BJ (cell line): ENCODE measurements at regions of chr6 and their contacts with region 1.

Region 1: GRCh38 chr6:18253635-18254034 is 10.7 kb downstream of the DEK start:
- DNase-seq: no peak
- H3K4me3 ChIP-seq: no peak overlapping the region
- H3K27me3 ChIP-seq: no peaks in the 10 kb centered on the region
- CTCF ChIP-seq: no peak

Region 2: GRCh38 chr6:17688481-17688880 is 565.2 kb before region 1 on chr6:
- CTCF ChIA-PET with region 1: no interaction called
- POLR2A ChIA-PET with region 1: interaction called, 12 read pairs
- DNase-seq: no peak
- H3K4me3 ChIP-seq: no peak overlapping the region
- H3K27me3 ChIP-seq: no peaks in the 10 kb centered on the region
- CTCF ChIP-seq: no peak

Region 3: GRCh38 chr6:18293076-18293904 is 39.7 kb after region 1 on chr6:
- CTCF ChIA-PET with region 1: no interaction called
- POLR2A ChIA-PET with region 1: no interaction called
- DNase-seq: peak; percentile 90
- H3K4me3 ChIP-seq: no peak overlapping the region
- H3K27me3 ChIP-seq: no peaks in the 10 kb centered on the region
- CTCF ChIP-seq: no peak

Region 4: DNA sequence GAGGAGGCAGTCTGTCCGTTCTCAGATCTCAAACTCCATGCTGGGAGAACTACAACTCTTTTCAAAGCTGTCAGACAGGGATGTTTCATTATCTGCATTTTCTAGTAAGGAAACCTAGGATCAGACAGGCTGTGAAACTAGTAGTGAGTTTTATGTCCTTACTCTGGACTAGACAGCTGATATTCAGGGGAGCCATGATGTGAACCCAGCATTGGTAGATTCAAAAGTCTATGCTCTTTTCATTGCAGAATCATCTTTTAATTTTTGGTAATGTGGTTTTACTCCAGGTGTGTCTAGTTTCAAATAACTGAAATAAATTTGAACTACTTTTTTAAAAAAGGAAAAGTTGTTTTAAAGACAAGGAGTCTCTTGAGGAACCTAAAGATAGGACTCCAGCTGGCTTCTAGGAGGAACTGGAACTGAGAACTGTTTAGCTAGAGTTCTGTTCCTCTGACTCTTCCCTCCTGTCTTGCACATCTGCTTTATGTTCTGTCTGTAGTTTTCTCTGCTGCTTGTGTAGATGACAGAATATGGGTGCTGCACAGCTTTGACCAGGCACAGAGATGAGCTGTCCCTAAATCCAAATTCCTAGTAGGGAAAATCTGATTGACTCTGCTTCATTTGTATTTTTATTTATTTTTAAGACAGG is 105.7 kb after region 1 on chr6:
- CTCF ChIA-PET with region 1: no interaction called
- POLR2A ChIA-PET with region 1: no interaction called
- DNase-seq: no peak
- H3K4me3 ChIP-seq: no peak overlapping the region
- H3K27me3 ChIP-seq: no peaks in the 10 kb centered on the region
- CTCF ChIP-seq: no peak